ENCODE measurements at regions of chr9 and their contacts with region 1.

Region 1: GRCh38 chr9:11194246-11194645 is 581.4 kb upstream of the PTPRD start:
- DNase-seq: no peak
- H3K4me3 Mint-ChIP-seq: no peak overlapping the region
- H3K27ac Mint-ChIP-seq: no peak overlapping the region
- H3K4me1 Mint-ChIP-seq: no peaks in the 10 kb centered on the region
- H3K27me3 Mint-ChIP-seq: no peaks in the 10 kb centered on the region
- CTCF ChIP-seq: no peak

Region 2: DNA sequence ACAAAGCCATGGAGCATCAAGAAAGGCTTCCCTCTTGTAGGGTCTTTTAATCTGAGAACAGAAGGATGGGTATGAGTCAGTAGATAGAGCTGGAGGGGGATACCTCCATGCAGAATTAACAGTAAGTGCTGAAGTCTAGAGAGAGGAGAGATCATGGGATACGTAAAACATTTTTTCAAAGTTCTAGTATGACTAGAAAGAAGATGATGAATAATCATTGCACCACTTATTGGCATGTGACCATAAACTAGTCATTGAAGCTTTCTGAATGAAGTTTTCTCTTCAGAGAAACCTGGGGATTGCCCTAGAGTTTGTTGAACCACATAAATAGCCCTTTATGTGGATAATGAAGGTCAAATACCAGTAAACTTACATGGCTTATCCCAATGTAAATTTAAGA is 532.9 kb before region 1 on chr9:
- CTCF ChIA-PET with region 1: no interaction called
- POLR2A ChIA-PET with region 1: no interaction called
- intact Hi-C with region 1: loop called (anchors 5 kb)
- DNase-seq: peak; percentile 18
- H3K4me3 Mint-ChIP-seq: no peak overlapping the region
- H3K27ac Mint-ChIP-seq: no peak overlapping the region
- H3K4me1 Mint-ChIP-seq: no peaks in the 10 kb centered on the region
- H3K27me3 Mint-ChIP-seq: peaks cover 65% of the 10 kb centered on the region
- CTCF ChIP-seq: no peak

Region 3: DNA sequence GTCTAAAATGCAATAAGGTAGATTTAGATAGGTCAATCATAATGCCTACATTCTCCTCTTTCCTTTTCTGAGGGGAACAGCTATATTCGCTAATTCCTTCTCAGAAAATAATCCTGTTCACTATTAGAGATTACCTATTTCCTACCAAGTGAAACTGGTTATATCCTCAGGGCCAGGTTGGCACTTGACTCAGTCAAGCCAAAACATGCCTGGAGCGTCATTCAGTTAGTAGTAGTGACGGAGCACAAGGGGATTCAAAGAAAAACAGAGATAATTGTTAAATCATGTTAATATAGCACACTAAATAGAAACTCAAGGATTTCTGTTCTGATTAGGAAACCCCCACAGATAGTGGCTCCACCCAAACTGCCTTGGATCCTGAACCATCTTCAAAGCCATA is 66.1 kb before region 1 on chr9:
- CTCF ChIA-PET with region 1: no interaction called
- POLR2A ChIA-PET with region 1: no interaction called
- intact Hi-C with region 1: no loop called
- DNase-seq: peak; percentile 1
- H3K4me3 Mint-ChIP-seq: no peak overlapping the region
- H3K27ac Mint-ChIP-seq: no peak overlapping the region
- H3K4me1 Mint-ChIP-seq: no peaks in the 10 kb centered on the region
- H3K27me3 Mint-ChIP-seq: peaks cover 8% of the 10 kb centered on the region
- CTCF ChIP-seq: no peak